ENCODE measurements at regions of chr7 and their contacts with region 1.

Region 1: DNA sequence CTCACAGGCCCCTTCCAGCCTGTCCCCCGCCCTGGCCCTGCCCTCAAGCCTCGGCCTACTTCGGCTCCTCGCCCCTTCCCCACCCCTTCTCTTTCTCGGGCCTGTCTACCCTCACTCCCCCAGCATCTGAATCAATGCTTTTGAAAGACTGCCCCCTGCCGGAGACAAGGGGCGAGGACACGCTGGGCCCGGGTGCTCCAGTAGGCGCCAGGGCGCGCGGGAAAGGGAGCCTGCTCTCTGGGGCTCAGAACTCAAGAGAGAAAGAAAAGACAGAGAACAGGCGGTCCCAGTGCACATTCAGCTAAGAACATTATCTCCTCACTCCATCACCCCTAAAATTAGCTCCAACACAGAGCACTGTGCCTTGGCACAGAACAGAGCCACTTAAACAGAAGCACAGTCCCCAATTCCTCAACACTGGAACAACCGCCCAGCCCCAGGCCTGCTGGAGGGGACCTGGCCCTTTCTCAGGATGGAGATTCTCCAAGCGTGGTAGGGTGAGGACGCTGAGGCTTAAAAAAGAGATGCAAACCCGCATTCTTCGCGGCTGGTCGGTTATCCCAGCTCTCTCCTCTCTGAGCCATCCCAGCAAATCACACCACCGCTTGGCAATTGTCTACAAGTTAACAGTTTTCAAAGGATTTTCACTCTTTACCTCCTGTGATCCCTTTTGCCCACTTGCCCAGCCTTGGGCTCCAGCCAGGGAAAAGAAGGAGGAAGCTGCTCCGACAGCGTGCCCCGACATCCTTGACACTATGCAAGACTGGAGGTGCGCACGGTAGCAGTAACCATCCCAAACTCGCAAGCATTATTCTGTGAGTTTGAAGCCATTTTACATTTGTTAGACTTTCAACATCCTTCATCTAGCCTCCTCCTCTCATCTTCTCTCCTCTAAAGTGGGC is 2.1 kb downstream of the GIGYF1 start:
- DNase-seq: peak; percentile 84
- ATAC-seq: peak; percentile 77 to 84
- H3K4me3 ChIP-seq: peak overlapping the region; percentile 80
- H3K27ac ChIP-seq: no peak overlapping the region
- H3K4me1 ChIP-seq: peaks cover 36% of the 10 kb centered on the region
- H3K27me3 ChIP-seq: no peaks in the 10 kb centered on the region
- CTCF ChIP-seq: peak; percentile 91

Region 2: GRCh38 chr7:100563809-100564400 is 128.0 kb before region 1 on chr7:
- intact Hi-C with region 1: loop called (anchors 10 kb)
- DNase-seq: peak; percentile 87
- ATAC-seq: peak; percentile 75 to 76
- H3K4me3 ChIP-seq: no peak overlapping the region
- H3K27ac ChIP-seq: no peak overlapping the region
- H3K4me1 ChIP-seq: peaks cover 14% of the 10 kb centered on the region
- H3K27me3 ChIP-seq: no peaks in the 10 kb centered on the region
- CTCF ChIP-seq: peak; percentile 96

Measured in lower lobe of right lung (tissue), 2 donors.